ENCODE measurements at regions of chr1 and their contacts with region 1.

Region 1: DNA sequence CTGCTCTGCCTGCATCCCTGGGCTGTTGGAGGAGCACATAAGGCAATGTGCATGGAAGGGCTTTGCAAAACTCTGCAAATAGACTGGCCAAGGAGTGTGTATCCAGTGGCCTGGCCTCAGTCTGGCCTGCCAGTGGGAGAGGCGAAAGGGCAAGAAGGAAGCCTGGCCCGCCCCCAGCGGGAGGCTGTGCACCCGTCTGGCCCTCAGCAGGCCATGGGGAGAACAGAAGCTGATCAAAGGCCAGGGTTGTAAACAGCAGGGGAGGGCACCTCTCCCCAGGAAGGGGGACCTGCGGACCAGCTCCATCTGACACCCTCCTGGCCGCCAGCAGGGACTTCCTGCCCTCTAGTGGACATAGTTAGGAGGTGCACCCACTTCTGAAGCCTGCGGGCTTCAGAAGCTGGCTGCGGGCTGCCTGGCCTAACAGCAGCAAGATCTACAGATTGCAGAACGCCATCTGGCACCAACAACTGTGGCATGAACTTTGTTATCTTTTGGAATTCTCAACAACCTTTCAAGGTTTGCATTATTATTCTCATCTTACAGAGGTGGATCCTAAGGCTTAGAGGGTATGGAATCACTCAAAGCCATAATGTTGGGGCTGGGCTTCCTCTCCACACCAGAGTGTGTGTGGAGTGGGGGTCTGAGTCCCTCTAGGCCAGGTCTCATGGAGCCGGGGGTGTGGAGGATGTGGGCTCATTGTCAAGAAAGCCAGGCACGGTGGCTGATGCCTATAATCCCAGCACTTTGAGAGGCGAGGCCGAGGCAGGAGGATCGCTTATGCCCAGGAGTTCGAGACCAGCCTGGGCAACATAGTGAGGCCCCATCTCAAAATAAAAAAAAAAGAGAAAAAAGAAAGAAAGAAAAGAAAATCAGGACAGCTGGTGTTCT is 18.9 kb upstream of the CDK18 start:
- DNase-seq: peak; percentile 67 to 90
- H3K4me3 ChIP-seq: peak overlapping the region in 1 of 4 experiments; percentile 28; a peak in 1 of 8 replicates
- H3K27ac ChIP-seq: no peak overlapping the region
- H3K4me1 ChIP-seq: peaks cover 0 to 16% (median 8%) of the 10 kb centered on the region in 4 experiments; a peak in 6 of 7 replicates
- H3K27me3 ChIP-seq: peaks cover 0 to 11% (median 4%) of the 10 kb centered on the region in 4 experiments; a peak in 4 of 7 replicates
- CTCF ChIP-seq: peak; percentile 96 to 98 (median 97)
- EP300 ChIP-seq: peak in 1 of 2 experiments; percentile 53; a peak in 1 of 3 replicates
- POLR2A ChIP-seq: no peak
- RAD21 ChIP-seq: peak; percentile 96 to 99

Region 2: DNA sequence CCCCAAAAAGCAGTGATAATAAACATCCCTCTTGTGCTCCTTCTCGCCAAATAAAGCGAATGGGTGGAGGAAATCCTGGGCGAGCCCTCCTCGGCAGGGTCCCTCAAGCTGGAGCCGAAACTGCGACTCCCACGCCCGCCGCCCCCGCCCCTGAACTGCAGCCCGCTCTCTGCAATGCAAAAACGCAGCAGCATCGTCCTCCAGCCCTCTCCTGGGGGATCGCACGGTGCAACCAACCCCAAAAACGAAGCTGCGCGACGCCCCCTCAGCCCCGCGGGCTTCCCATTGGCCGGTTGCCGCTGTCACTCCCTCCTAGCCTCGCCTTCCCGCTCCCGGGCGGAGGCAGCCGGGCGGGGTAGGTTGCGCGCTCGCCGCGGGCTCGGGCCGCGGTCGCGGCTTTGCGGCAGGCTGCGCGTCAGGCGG is 258.0 kb before region 1 on chr1 and contains the start of gene TMCC2:
- CTCF ChIA-PET with region 1: no interaction called
- POLR2A ChIA-PET with region 1: no interaction called
- DNase-seq: peak; percentile 73 to 97
- H3K4me3 ChIP-seq: peak within 1 kb of the TSS; percentile 59 to 85 (median 73)
- H3K27ac ChIP-seq: no peak within 1 kb of the TSS
- H3K4me1 ChIP-seq: peaks cover 13 to 18% (median 16%) of the 10 kb centered on the region in 4 experiments; a peak in 6 of 7 replicates
- H3K27me3 ChIP-seq: peaks cover 0 to 6% (median 4%) of the 10 kb centered on the region in 4 experiments; a peak in 5 of 7 replicates
- CTCF ChIP-seq: no peak
- EP300 ChIP-seq: no peak
- POLR2A ChIP-seq: peak in 1 of 2 experiments; percentile 45; a peak in 1 of 3 replicates
- RAD21 ChIP-seq: no peak
- total RNA-seq, gene TMCC2: 6.7 and 7.2 TPM in 2 replicates

Region 3: GRCh38 chr1:205326812-205327466 is 158.6 kb before region 1 on chr1:
- CTCF ChIA-PET with region 1: interaction called, 14 read pairs
- POLR2A ChIA-PET with region 1: no interaction called
- DNase-seq: no peak
- H3K4me3 ChIP-seq: no peak overlapping the region
- H3K27ac ChIP-seq: no peak overlapping the region
- H3K4me1 ChIP-seq: peaks cover 3 to 14% (median 7%) of the 10 kb centered on the region in 4 experiments
- H3K27me3 ChIP-seq: no peaks in the 10 kb centered on the region
- CTCF ChIP-seq: no peak
- EP300 ChIP-seq: no peak
- POLR2A ChIP-seq: no peak
- RAD21 ChIP-seq: no peak

Region 4: DNA sequence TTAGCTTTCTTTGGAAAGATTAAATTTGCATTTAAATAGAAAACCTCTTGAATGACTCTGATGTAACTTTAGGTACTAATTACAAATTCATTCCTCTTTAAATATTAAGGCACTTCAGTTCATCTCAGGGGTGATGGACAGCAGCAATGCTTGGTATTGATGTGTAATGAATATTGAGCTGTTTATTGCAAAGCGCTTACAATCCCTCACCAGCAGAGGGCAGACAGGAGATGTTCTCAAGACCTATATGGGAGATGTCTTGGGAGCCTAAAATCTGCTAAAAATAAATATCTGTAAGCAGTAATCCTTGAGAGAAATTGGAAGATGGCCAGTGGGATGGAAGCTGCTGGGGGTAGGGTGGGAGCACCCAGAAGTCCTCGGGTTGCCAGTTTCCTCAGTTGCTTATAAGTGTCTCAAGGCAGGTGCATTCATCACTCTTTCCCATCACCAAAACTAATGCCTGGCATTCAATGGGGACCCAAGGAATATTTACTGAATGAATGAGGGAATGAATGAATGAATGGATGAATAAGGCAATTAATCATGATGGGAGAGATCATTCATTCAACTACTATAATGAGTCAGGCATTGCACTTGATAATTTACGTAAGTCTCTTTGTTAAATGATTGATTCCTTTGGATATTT is 131.2 kb before region 1 on chr1:
- CTCF ChIA-PET with region 1: interaction called, 24 read pairs
- POLR2A ChIA-PET with region 1: no interaction called
- DNase-seq: peak in 1 of 2 experiments; percentile 69
- H3K4me3 ChIP-seq: no peak overlapping the region
- H3K27ac ChIP-seq: no peak overlapping the region
- H3K4me1 ChIP-seq: peaks cover 22 to 47% (median 31%) of the 10 kb centered on the region in 4 experiments
- H3K27me3 ChIP-seq: no peaks in the 10 kb centered on the region
- CTCF ChIP-seq: peak in 2 of 3 experiments; percentile 75 to 84; a peak in 3 of 4 replicates
- EP300 ChIP-seq: no peak
- POLR2A ChIP-seq: no peak
- RAD21 ChIP-seq: peak; percentile 56 to 66

Region 5: GRCh38 chr1:205410581-205411298 is 74.8 kb before region 1 on chr1:
- CTCF ChIA-PET with region 1: interaction called, 302 read pairs
- POLR2A ChIA-PET with region 1: no interaction called
- DNase-seq: no peak
- H3K4me3 ChIP-seq: no peak overlapping the region
- H3K27ac ChIP-seq: no peak overlapping the region
- H3K4me1 ChIP-seq: no peaks in the 10 kb centered on the region
- H3K27me3 ChIP-seq: peaks cover 0 to 1% (median 0%) of the 10 kb centered on the region in 4 experiments; a peak in 1 of 7 replicates
- CTCF ChIP-seq: no peak
- EP300 ChIP-seq: no peak
- POLR2A ChIP-seq: no peak
- RAD21 ChIP-seq: no peak

Region 6: GRCh38 chr1:205440476-205441317 is 44.9 kb before region 1 on chr1:
- CTCF ChIA-PET with region 1: interaction called, 767 read pairs
- POLR2A ChIA-PET with region 1: interaction called, 4 read pairs
- DNase-seq: peak in 1 of 2 experiments; percentile 65
- H3K4me3 ChIP-seq: no peak overlapping the region
- H3K27ac ChIP-seq: no peak overlapping the region
- H3K4me1 ChIP-seq: peaks cover 40 to 69% (median 53%) of the 10 kb centered on the region in 4 experiments
- H3K27me3 ChIP-seq: peaks cover 0 to 10% (median 4%) of the 10 kb centered on the region in 4 experiments; a peak in 1 of 7 replicates
- CTCF ChIP-seq: no peak
- EP300 ChIP-seq: no peak
- POLR2A ChIP-seq: 0 out of 3 replicates have a peak, but pooled peaks of 1 of the 2 experiments have one; percentile 17
- RAD21 ChIP-seq: no peak

Region 7: DNA sequence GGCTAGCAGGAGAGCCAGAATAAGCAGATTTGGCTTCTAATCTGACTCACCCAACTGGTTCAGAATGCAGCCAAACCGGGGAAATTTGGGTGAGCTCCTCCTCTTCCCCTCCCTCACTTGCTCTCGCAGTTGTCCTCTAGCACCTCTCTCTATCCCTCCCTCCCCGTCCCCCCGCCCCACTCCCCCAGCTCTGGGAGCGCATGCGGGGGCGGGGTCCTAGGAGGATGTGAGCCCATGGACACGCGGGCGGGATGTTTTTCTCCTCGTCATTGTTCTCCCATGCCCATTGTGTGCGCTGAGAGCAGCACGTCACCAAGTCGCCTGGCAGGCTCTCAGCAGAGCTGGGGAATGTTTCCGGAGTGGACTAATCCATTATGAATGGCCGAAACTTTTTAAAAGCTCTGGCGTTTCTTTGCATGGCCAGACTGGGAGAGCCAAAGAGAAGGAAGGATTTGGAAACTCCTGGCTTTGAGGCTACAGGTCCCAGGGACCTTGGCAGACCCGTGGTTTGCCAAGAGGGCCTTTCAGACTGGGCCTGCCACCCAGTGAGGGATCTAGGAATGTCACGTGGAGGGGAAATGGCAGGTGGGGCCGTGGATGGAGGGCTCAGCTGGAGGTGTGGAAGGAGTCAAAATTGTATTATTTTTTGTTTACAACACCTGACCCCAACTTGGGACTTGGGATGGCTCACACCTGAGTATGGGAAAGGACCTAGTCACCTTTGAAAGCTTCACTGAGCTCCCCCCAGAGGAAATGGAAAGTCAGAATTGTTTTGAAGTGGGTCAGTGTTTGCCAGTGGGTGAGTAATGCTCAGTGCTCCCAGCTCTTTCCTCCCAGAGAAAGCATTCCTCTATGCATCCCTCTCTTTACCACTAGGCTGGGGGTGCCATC is 58.1 kb after region 1 on chr1:
- CTCF ChIA-PET with region 1: interaction called, 1,626 read pairs
- POLR2A ChIA-PET with region 1: no interaction called
- DNase-seq: peak; percentile 50 to 80
- H3K4me3 ChIP-seq: peak overlapping the region; percentile 12 to 52 (median 28); a peak in 7 of 8 replicates
- H3K27ac ChIP-seq: no peak overlapping the region; the same call in 1 of the 2 replicates
- H3K4me1 ChIP-seq: peaks cover 0 to 14% (median 7%) of the 10 kb centered on the region in 4 experiments; a peak in 5 of 7 replicates
- H3K27me3 ChIP-seq: peaks cover 0 to 26% (median 13%) of the 10 kb centered on the region in 4 experiments; a peak in 6 of 7 replicates
- CTCF ChIP-seq: no peak
- EP300 ChIP-seq: no peak
- POLR2A ChIP-seq: no peak
- RAD21 ChIP-seq: no peak